Activated CD4-positive, alpha-beta memory T cell treated with anti-CD3 and anti-CD28 coated beads, Interleukin-2, amount 10 ng/mL, durations not matched to agents 7 days and 5 days (primary cell): ENCODE measurements at regions of chr7 and their contacts with region 1.

Region 1: GRCh38 chr7:6447581-6448199 is at the start of gene DAGLB:
- DNase-seq: peak; percentile 96
- H3K4me3 Mint-ChIP-seq: peak within 1 kb of the TSS; percentile 88
- H3K27ac Mint-ChIP-seq: peak within 1 kb of the TSS; percentile 92
- H3K4me1 Mint-ChIP-seq: peaks cover 31% of the 10 kb centered on the region
- H3K27me3 Mint-ChIP-seq: no peaks in the 10 kb centered on the region
- total RNA-seq, gene DAGLB: 15.7 to 16.5 TPM

Region 2: DNA sequence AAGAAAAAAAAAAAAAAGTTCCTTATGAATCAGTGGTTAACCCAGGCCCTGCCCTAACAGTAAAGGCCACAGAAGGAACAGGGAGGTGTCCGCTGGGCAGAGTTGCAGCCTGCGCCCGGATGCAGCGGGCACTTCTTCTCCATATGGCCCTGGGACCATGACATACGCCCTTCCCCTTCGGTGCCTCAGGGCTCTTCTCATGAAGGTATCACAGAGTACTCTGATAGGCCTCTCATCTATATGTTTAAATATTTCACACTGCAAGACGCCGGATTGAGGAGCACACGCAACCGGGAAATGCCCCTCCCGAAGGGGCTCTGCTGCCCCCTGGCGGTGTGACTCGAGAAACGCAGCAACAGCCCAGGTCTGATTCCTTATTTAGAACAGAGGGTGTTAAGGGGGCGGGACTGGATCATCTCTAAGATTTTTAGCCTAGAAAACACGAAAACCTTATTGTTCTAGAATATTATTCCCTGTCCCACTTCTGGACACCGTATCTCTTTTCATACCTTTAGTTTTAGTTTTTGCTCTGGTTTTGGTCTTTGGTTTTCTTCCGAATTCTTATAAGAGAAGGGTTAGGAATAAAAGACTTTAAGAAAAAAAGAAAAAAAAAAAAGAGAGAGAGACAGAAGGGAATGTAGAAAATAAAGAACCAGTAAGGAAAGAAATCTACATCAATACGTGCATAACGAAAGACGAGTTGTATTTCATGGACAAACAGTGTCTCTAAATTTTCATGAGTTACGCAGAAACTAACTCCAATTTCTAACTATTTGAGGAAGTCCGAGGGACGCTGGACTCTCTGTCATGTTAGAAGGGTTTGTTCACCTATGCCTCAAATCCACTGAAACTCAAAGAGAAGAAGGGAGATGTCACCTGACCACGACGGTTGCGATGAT is 12.0 kb before region 1 on chr7:
- CTCF ChIA-PET with region 1: interaction called, 15 read pairs
- POLR2A ChIA-PET with region 1: interaction called, 39 read pairs
- DNase-seq: peak; percentile 89
- H3K4me3 Mint-ChIP-seq: peak overlapping the region; percentile 15
- H3K27ac Mint-ChIP-seq: peak overlapping the region; percentile 73
- H3K4me1 Mint-ChIP-seq: peaks cover 37% of the 10 kb centered on the region
- H3K27me3 Mint-ChIP-seq: no peaks in the 10 kb centered on the region

Region 3: DNA sequence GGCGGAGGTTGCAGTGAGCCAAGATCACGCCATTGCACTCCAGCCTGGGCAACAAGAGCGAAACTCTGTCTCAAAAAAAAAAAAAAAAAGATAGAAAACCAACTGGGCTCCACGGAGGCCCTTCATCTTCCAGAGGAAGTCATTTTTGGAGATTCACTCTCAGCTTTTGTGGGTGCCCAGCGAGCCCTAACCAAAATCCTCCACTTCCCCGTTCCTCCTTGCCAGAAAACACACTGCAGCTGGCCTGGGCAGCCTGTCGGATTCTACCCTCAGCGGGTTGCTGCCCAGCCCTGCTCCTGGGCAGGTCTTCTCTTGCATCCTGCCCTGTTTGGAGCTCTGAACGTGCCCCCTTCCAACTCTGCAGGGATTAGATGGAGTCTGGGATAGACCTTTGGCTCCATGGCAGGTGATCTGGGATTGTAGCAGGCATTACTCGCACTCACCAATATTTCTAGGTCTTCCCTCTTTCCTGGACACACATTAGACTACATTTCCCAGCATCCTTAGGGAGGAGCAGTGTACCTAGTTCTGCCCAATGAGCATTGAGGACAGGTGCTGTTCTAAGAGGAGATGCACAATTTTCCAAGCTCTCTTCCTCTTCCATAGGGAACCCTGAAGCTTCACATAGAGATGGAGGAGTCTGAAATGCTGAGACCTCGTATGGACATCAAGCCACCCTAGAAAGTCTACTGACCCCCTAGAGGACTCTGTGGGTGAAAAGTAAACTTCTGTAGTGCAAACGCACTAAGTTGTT is 99.0 kb after region 1 on chr7:
- CTCF ChIA-PET with region 1: no interaction called
- POLR2A ChIA-PET with region 1: no interaction called
- DNase-seq: no peak
- H3K4me3 Mint-ChIP-seq: no peak overlapping the region
- H3K27ac Mint-ChIP-seq: no peak overlapping the region
- H3K4me1 Mint-ChIP-seq: peaks cover 4% of the 10 kb centered on the region
- H3K27me3 Mint-ChIP-seq: no peaks in the 10 kb centered on the region